Activated CD4-positive, alpha-beta memory T cell treated with anti-CD3 and anti-CD28 coated beads for 36 hours (primary cell): ENCODE measurements at regions of chr15 and their contacts with region 1.

Region 1: GRCh38 chr15:76139368-76140073 is 79.7 kb downstream of the TMEM266 start:
- DNase-seq: peak; percentile 84
- H3K4me3 Mint-ChIP-seq: no peak overlapping the region
- H3K27ac Mint-ChIP-seq: no peak overlapping the region
- H3K4me1 Mint-ChIP-seq: peaks cover 9% of the 10 kb centered on the region
- H3K27me3 Mint-ChIP-seq: peaks cover 26% of the 10 kb centered on the region

Region 2: DNA sequence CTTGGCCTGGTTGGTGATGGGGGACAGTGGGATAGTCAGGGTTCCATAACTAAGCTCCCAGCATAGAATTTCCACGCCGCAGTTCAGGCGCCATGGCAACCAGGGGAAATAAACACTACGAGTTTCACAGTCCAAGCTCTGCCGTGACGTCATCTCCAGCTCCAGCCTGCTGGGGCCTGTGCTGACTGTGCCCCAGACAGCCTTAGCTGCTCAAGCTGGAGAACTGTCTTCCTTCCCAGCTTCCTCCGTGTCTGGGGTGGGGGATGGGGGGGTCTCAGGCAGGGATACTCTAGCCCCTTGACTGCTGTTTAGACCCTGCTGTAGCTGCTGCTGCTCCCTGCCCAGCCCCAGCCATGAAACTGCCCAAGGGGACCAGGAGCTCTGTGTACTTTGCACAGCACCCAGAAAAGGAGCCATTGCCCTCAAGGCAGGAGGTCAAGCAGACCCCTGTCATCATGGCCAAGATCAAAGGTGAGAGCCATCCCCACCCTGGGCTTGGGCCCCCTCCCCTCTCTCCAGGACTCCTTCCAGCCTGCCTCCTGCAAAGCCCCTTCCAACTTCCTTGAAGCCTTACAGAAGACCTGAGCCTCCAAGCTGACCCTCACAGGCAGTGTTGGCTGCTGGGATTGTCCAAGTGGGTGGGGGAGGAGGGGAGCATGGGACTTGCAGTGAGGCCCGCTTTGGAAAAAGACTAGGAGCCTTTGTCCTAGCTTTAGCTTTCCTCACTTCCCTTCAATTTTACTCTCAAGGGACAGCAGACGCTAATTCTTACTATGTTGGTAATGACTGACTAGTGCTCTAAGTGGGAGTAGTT is 415.5 kb before region 1 on chr15:
- CTCF ChIA-PET with region 1: interaction called, 13 read pairs
- POLR2A ChIA-PET with region 1: no interaction called
- intact Hi-C with region 1: loop called (anchors 10 kb)
- DNase-seq: peak; percentile 73
- H3K4me3 Mint-ChIP-seq: no peak overlapping the region
- H3K27ac Mint-ChIP-seq: no peak overlapping the region
- H3K4me1 Mint-ChIP-seq: peaks cover 8% of the 10 kb centered on the region
- H3K27me3 Mint-ChIP-seq: peaks cover 9% of the 10 kb centered on the region

Region 3: DNA sequence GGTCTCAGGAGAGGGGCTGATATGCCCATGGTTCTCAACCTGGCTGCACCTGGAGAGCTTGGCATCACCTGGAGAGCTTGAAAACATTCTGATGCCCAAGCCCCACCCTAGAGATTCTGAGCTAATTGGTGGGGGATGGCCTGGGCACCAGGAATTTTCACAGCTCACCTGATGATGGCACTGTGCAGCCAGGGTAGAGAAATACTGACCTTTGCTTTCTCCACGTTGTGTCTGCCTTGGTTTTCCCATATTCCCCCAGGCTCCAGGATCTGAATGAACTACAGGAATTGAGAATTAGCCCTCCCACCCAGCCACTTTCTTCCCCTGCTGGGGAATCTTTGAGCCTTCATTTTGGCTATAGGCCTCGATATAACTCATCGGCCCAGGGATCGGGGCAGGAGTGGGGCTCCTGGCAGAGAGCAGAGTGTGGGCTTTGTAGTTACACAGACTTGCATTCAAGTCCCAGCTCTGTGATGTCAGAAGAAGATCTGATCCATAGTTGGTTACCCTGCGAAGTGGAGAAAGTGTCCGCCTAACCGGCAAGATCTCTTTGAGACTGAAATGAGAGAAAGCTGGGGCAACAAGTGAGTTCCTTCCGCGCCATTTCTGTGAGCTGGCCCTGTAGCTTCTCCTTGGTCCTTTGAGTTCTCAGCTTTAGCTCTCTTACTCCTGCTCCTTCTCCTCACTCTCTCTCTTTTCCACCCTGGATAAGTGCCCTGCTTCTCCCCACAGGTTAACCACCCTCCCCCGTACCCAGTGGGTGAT is 329.4 kb before region 1 on chr15:
- CTCF ChIA-PET with region 1: interaction called, 55 read pairs
- POLR2A ChIA-PET with region 1: no interaction called
- intact Hi-C with region 1: loop called (anchors 2 kb)
- DNase-seq: peak; percentile 28
- H3K4me3 Mint-ChIP-seq: no peak overlapping the region
- H3K27ac Mint-ChIP-seq: no peak overlapping the region
- H3K4me1 Mint-ChIP-seq: no peaks in the 10 kb centered on the region
- H3K27me3 Mint-ChIP-seq: no peaks in the 10 kb centered on the region

Region 4: DNA sequence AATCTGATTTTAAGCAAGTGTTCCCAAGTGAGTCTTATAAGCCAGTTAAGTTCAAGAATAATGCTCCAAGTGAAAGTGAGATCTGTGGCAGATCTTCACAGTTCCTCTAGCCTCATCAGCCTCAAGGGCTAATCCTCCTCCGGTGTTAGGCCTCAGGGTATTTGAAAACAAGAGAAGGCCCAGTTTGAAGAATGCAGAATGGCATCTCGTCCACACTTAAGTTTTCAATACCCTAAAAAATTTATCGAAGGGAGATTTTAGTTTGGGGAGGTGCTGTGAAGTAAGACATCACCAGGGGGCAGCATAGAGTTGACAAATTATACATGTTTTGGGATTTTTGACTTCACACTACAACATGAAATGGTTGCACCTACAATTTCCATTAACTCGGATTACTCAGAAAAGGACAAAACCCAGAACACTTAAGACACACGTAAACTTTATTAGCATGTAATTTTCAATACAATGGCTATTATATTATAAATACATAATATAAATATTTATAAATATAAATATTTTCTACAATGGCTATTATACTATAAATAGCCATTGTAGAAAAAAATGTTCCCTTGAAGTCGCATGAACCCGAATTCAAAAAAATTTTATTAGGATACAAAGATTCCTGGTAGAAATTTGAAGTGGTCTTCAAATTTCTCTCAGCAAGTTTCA is 82.1 kb before region 1 on chr15:
- CTCF ChIA-PET with region 1: interaction called, 441 read pairs
- POLR2A ChIA-PET with region 1: no interaction called
- intact Hi-C with region 1: loop called (anchors 1 kb)
- DNase-seq: peak; percentile 45
- H3K4me3 Mint-ChIP-seq: no peak overlapping the region
- H3K27ac Mint-ChIP-seq: no peak overlapping the region
- H3K4me1 Mint-ChIP-seq: peaks cover 19% of the 10 kb centered on the region
- H3K27me3 Mint-ChIP-seq: peaks cover 44% of the 10 kb centered on the region

Region 5: GRCh38 chr15:76065267-76065666 is 74.3 kb before region 1 on chr15:
- CTCF ChIA-PET with region 1: interaction called, 441 read pairs
- POLR2A ChIA-PET with region 1: no interaction called
- intact Hi-C with region 1: no loop called
- DNase-seq: peak; percentile 39
- H3K4me3 Mint-ChIP-seq: no peak overlapping the region
- H3K27ac Mint-ChIP-seq: no peak overlapping the region
- H3K4me1 Mint-ChIP-seq: peaks cover 12% of the 10 kb centered on the region
- H3K27me3 Mint-ChIP-seq: peaks cover 39% of the 10 kb centered on the region

Region 6: DNA sequence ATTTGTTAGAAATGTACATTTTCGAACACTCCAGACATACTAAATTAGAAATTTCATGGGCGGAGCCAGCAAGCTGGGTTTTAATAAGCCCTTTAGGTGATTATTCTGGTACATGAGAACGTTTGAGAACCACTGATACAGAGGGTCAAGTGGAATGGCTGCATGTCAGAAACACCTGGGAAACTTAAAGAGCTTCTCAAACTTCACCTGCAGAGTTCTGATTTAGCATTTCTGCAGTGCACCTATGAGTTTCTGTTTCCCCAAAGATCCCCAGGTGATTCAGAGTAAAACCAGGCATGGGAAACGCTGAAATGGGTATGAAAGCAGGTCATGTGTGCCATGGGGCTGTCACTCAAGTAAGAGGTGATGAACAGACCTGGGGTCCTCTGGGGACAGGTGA is 11.6 kb before region 1 on chr15:
- CTCF ChIA-PET with region 1: interaction called, 11 read pairs
- POLR2A ChIA-PET with region 1: no interaction called
- intact Hi-C with region 1: no loop called
- DNase-seq: no peak
- H3K4me3 Mint-ChIP-seq: no peak overlapping the region
- H3K27ac Mint-ChIP-seq: no peak overlapping the region
- H3K4me1 Mint-ChIP-seq: no peaks in the 10 kb centered on the region
- H3K27me3 Mint-ChIP-seq: peaks cover 11% of the 10 kb centered on the region

Region 7: DNA sequence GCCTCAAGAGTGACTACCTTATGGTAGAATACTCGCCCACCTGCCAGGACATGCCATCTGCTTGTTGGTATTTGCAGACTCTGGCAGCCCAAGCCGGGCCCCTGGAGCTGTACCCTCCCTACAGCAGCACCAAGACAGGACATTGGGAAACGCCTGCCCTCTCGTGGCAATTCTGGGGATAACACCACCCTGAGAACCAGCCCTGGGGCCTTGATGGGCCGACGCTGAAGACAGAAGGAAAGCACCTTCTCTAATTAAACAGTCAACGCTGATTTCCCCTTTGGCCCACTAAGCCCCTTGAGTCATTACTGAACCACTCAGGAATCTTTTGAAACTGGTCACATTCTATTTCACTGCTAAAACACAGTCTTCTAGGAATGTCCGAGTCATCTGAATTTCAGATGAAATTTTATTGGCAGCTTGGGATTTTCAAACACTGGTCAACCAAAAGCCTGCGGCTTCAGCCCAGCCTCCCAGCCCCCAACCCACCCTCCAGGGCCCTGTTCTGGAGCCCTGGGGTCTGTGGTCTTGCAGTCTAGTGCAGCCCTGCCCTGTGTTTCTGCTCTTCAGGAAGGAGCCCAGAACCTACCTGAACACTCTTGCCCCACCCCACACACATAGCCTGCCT is 11.6 kb after region 1 on chr15:
- CTCF ChIA-PET with region 1: interaction called, 93 read pairs
- POLR2A ChIA-PET with region 1: no interaction called
- intact Hi-C with region 1: loop called (anchors 1 kb)
- DNase-seq: peak; percentile 90
- H3K4me3 Mint-ChIP-seq: no peak overlapping the region
- H3K27ac Mint-ChIP-seq: no peak overlapping the region
- H3K4me1 Mint-ChIP-seq: peaks cover 23% of the 10 kb centered on the region
- H3K27me3 Mint-ChIP-seq: peaks cover 8% of the 10 kb centered on the region

Region 8: DNA sequence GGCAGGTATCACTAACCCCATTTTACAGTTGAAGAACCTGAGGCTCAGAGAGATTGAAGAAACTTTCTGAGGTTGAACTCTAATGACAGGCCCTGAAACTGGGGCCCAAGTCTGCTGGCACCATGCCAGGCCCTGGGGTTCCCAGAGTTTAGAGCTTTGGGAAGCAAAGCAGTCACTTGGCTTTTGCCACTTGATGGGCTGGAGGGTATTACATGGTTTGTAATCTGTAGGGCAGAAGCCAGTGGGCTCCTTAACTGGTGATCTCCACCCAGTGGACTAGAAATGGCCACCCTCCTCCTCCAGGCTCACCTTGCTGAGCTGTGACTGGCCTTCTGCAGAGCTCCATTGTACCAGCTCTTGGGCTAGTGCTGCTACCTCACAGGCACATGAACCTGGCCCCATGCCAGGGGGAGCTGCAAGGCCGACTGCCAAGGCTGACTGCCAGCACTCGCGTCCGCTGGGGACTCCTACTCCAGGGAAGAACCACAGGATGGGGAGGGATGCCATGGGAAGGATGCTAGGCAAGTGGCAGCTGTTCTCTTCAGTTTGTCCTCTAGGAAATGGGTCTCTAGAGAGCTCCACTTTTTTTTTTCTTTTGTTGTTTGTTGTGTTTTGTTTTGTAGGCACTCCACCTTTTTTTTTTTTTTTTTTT is 66.9 kb after region 1 on chr15:
- CTCF ChIA-PET with region 1: no interaction called
- POLR2A ChIA-PET with region 1: no interaction called
- intact Hi-C with region 1: no loop called
- DNase-seq: no peak
- H3K4me3 Mint-ChIP-seq: no peak overlapping the region
- H3K27ac Mint-ChIP-seq: no peak overlapping the region
- H3K4me1 Mint-ChIP-seq: no peaks in the 10 kb centered on the region
- H3K27me3 Mint-ChIP-seq: no peaks in the 10 kb centered on the region

Region 9: GRCh38 chr15:76217029-76217428 is 77.5 kb after region 1 on chr15:
- CTCF ChIA-PET with region 1: no interaction called
- POLR2A ChIA-PET with region 1: no interaction called
- intact Hi-C with region 1: no loop called
- DNase-seq: no peak
- H3K4me3 Mint-ChIP-seq: no peak overlapping the region
- H3K27ac Mint-ChIP-seq: no peak overlapping the region
- H3K4me1 Mint-ChIP-seq: no peaks in the 10 kb centered on the region
- H3K27me3 Mint-ChIP-seq: no peaks in the 10 kb centered on the region